ENCODE measurements at regions of chr17 and their contacts with region 1.

Region 1: GRCh38 chr17:8118769-8119580 is 661 bp upstream of the ALOXE3 start:
- DNase-seq: peak; percentile 86
- H3K4me3 Mint-ChIP-seq: peak overlapping the region; percentile 85
- H3K27ac Mint-ChIP-seq: peak overlapping the region; percentile 88
- H3K4me1 Mint-ChIP-seq: peaks cover 53% of the 10 kb centered on the region
- H3K27me3 Mint-ChIP-seq: peaks cover 65% of the 10 kb centered on the region

Region 2: DNA sequence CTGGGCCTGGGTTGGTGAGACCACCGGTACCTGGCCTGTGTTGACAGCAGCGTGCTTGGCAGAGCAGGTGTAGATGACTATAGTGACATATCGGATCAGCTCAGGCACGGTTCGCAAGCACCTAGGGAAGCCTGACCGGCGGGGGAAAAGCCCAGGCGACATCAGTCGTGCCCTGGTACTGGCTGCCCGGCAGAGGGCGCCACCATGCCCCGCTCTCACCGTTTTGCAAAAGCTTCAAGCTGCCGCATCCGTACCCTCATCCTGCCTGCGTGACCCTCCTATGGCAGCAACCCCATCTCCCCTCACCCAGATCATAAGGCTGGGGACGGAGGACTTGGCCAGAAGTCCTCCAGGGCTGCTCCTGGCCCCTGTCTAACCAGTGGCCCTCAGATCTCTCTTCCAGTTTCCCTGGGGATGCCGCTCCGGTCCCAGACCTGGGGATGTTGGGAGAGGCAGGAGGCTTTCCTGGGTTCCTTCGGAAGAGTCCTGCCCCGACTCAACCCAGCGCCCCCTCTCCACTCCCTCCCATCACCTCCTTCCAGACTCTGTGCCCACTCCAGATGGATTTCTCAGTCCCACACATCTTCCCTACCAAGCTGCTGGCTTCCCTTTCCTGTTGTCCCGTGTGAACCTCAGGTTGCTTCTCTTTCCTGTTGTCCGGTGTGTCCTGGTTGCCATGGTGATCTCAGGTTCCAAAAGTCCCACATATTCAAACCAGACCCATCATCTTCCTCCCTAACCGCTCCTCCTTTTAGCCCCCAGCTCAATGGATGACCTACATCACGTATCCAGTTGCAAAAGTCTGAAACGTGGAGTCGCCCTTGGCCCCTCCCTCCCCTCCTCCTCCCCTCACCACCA is 45.1 kb before region 1 on chr17:
- CTCF ChIA-PET with region 1: interaction called, 14 read pairs
- POLR2A ChIA-PET with region 1: no interaction called
- DNase-seq: peak; percentile 85
- H3K4me3 Mint-ChIP-seq: peak overlapping the region; percentile 60
- H3K27ac Mint-ChIP-seq: no peak overlapping the region
- H3K4me1 Mint-ChIP-seq: peaks cover 21% of the 10 kb centered on the region
- H3K27me3 Mint-ChIP-seq: peaks cover 57% of the 10 kb centered on the region

Region 3: DNA sequence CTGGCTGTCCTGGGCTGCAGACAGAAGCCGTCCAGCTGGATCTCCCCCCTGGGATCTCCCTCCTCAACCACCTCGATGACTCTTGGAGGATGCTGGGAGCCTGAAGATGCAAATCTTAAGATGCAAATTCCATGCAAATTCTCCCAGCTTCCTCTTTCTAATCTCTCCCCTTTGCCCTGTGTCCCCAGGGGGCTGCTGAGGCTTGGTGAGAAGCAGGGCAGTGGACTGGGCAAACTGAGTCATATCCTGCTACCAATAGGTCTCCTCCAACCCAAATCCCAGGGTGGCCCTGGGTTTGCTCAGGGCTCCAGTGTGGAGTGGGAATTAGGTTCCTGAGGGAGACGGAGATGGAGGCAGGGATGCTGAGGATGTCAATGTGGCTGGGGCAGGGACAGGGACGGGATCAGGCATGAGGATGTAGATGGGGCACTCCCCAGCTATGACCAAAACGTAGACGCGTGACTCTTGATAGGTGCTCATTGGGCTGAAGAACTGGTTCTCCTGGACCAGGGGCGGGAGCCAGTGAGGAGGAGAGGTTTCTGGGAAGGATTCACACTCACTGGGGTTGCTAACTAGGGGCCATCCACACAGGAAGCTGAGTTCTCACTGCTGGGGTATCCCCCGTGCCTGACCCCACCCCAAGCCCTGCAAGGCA is 27.8 kb before region 1 on chr17:
- CTCF ChIA-PET with region 1: interaction called, 27 read pairs
- POLR2A ChIA-PET with region 1: no interaction called
- DNase-seq: no peak
- H3K4me3 Mint-ChIP-seq: no peak overlapping the region
- H3K27ac Mint-ChIP-seq: no peak overlapping the region
- H3K4me1 Mint-ChIP-seq: peaks cover 14% of the 10 kb centered on the region
- H3K27me3 Mint-ChIP-seq: peaks cover 30% of the 10 kb centered on the region

Region 4: GRCh38 chr17:8138672-8139371 is 19.8 kb after region 1 on chr17:
- CTCF ChIA-PET with region 1: interaction called, 29 read pairs
- POLR2A ChIA-PET with region 1: no interaction called
- DNase-seq: peak; percentile 96
- H3K4me3 Mint-ChIP-seq: no peak overlapping the region
- H3K27ac Mint-ChIP-seq: no peak overlapping the region
- H3K4me1 Mint-ChIP-seq: peaks cover 2% of the 10 kb centered on the region
- H3K27me3 Mint-ChIP-seq: peaks cover 5% of the 10 kb centered on the region

Region 5: DNA sequence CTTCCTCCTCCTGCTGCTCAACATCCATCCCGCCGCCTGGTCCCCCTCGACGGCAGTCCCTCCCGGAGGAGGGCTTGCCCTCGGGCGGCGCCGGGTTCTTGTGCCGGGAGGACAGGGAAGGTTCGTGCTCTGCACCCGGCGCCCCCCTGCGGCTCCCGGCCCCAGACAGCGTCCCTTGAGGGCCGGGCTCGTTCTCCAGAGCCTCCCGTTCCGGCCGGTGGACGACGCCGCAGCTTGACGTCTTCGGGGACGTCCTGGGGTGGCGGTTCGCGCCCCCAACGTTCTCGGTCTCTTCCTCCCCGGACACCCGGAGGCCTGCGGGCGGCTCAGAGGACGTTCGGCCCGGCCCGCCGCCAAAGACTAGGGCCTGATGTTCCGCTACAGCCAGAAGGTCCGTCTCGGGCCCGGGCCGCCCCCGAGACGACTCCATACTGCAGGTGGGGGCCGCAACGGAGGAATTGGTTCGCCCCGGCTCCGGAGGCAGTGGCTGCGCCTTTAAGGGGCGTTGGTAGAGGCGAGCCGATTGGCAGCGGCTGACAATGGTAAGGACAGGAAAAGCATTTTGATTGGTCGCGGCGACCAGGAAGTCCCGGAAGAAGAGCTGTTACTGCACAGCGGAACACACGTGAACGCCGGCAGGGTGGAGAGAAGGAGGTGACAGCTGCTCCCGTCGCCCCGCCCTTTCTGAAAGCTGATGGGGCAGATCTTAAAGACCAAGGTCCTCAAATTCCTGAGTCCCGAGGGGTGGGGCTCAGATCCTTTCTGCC is 70.9 kb after region 1 on chr17 and contains the start of gene BORCS6:
- CTCF ChIA-PET with region 1: interaction called, 16 read pairs
- POLR2A ChIA-PET with region 1: interaction called, 5 read pairs
- DNase-seq: peak; percentile 97
- H3K4me3 Mint-ChIP-seq: no peak within 1 kb of the TSS
- H3K27ac Mint-ChIP-seq: peak within 1 kb of the TSS; percentile 42
- H3K4me1 Mint-ChIP-seq: peaks cover 11% of the 10 kb centered on the region
- H3K27me3 Mint-ChIP-seq: no peaks in the 10 kb centered on the region
- total RNA-seq, gene BORCS6: 12.2 to 12.9 TPM

Region 6: DNA sequence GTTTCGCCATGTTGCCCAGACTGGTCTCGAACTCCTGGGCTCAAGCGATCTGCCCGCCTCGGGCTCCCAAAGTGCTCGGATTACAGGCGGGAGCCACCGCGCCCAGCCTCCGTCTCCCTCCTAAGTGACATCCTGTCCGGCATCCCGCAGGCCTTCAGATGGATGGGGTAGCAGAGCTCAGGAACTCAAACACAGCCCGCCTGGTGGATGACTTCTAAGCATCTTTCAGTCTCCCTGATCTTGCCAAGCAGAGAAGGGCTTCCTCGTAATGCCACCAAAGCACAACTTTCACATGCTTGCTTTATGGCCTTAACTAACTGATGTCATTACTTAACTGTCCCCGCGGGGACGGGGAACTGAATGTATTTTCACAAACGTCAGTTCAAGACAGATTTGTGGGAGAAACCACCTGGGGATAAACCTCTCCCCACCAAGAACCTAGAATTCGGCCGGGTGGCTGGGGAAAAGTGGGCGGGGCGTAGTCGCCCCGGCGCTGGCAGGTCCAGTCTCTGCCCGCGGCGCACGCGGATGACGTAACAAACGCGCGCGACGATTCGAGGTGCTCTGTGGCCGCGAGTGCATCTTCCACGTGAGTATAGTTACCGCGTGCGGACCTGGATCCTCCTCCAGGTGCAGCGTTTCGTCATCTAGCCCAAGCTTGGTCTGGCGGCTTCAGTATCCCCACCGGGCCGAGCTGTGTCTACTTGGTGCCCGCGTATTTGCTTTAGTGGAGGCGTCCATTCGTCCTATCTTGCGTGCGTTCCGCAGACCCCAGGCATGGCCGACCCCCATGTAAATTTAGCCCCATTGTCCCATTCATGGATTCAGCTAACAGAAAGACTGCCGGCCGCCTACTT is 130.0 kb after region 1 on chr17 and contains the start of gene PFAS:
- CTCF ChIA-PET with region 1: interaction called, 4 read pairs
- POLR2A ChIA-PET with region 1: interaction called, 10 read pairs
- DNase-seq: peak; percentile 96
- H3K4me3 Mint-ChIP-seq: peak within 1 kb of the TSS; percentile 98
- H3K27ac Mint-ChIP-seq: peak within 1 kb of the TSS; percentile 100
- H3K4me1 Mint-ChIP-seq: peaks cover 42% of the 10 kb centered on the region
- H3K27me3 Mint-ChIP-seq: no peaks in the 10 kb centered on the region
- total RNA-seq, gene PFAS: 54.0 to 60.4 TPM

Region 7: GRCh38 chr17:8585911-8586310 is 466.9 kb after region 1 on chr17:
- CTCF ChIA-PET with region 1: no interaction called
- POLR2A ChIA-PET with region 1: no interaction called
- DNase-seq: no peak
- H3K4me3 Mint-ChIP-seq: no peak overlapping the region
- H3K27ac Mint-ChIP-seq: no peak overlapping the region
- H3K4me1 Mint-ChIP-seq: peaks cover 5% of the 10 kb centered on the region
- H3K27me3 Mint-ChIP-seq: no peaks in the 10 kb centered on the region